Naive thymus-derived CD4-positive, alpha-beta T cell (primary cell): ENCODE measurements at regions of chr5 and their contacts with region 1.

Region 1: DNA sequence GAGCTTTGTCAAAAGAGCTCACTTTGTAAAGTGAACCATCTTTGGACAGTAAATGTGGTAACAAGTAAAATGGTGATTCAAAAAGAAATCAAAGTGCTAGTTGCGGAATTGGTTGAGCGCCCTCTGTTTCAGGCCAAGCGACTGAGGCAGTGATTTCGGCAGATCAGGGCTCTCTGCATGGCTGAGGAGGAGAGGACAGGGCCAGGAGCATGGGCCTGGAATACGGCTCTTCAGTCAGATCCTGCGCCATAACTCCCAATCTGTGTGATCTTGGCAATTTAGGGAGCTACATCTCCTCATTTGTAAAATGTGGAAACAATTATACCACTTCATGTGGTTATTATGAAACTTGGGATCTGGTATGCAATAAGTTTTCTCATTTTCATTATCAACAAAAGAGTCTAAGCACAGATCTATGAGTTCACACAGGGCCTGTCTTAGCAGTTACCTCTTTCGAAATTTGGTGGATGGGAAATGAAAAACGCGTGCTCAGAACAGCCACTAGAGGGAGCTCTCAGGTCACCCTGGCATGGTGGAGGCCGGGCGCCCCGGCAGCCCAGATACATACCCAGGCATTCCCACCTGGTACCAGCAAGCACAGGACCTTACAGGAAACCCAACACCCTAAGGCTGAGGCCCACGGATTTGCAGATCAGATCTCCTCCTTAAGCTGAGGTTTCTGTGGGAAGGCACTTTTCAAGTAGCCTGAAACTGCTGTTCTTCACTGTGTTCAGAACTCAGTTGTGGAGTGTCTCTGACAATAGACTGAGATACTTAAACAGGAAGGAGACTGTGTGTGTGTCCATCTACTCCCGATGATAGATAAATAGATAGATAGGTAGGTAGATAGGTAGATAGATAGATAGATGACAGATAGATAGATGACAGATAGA is 303.7 kb downstream of the RAB3C start:
- DNase-seq: peak; percentile 41 to 77 (median 66)
- ATAC-seq: peak; percentile 91
- H3K4me3 ChIP-seq: no peak overlapping the region
- H3K4me3 Mint-ChIP-seq: peak overlapping the region in 7 of 10 donors; percentile 0 to 67 (median 38)
- H3K27ac ChIP-seq: no peak overlapping the region
- H3K27ac Mint-ChIP-seq: peak overlapping the region in 8 of 9 donors; percentile 13 to 85 (median 49)
- H3K4me1 ChIP-seq: peaks cover 0 to 10% of the 10 kb centered on the region in 2 donors
- H3K4me1 Mint-ChIP-seq: peaks cover 19 to 38% (median 27%) of the 10 kb centered on the region in 7 donors
- H3K27me3 ChIP-seq: no peaks in the 10 kb centered on the region
- H3K27me3 Mint-ChIP-seq: peaks cover 0 to 12% (median 0%) of the 10 kb centered on the region in 5 donors

Region 2: GRCh38 chr5:59007460-59008063 is 121.0 kb after region 1 on chr5:
- CTCF ChIA-PET with region 1: interaction called, 8 read pairs
- POLR2A ChIA-PET with region 1: no interaction called
- intact Hi-C with region 1: loop called (anchors 1 to 5 kb)
- DNase-seq: peak in 4 of 9 donors; percentile 12 to 40 (median 29)
- ATAC-seq: no peak
- H3K4me3 ChIP-seq: no peak overlapping the region
- H3K4me3 Mint-ChIP-seq: no peak overlapping the region
- H3K27ac ChIP-seq: no peak overlapping the region
- H3K27ac Mint-ChIP-seq: peak overlapping the region in 1 of 9 donors; percentile 7
- H3K4me1 ChIP-seq: peaks cover 0 to 6% of the 10 kb centered on the region in 2 donors
- H3K4me1 Mint-ChIP-seq: peaks cover 25 to 79% (median 55%) of the 10 kb centered on the region in 7 donors
- H3K27me3 ChIP-seq: no peaks in the 10 kb centered on the region
- H3K27me3 Mint-ChIP-seq: no peaks in the 10 kb centered on the region

Region 3: DNA sequence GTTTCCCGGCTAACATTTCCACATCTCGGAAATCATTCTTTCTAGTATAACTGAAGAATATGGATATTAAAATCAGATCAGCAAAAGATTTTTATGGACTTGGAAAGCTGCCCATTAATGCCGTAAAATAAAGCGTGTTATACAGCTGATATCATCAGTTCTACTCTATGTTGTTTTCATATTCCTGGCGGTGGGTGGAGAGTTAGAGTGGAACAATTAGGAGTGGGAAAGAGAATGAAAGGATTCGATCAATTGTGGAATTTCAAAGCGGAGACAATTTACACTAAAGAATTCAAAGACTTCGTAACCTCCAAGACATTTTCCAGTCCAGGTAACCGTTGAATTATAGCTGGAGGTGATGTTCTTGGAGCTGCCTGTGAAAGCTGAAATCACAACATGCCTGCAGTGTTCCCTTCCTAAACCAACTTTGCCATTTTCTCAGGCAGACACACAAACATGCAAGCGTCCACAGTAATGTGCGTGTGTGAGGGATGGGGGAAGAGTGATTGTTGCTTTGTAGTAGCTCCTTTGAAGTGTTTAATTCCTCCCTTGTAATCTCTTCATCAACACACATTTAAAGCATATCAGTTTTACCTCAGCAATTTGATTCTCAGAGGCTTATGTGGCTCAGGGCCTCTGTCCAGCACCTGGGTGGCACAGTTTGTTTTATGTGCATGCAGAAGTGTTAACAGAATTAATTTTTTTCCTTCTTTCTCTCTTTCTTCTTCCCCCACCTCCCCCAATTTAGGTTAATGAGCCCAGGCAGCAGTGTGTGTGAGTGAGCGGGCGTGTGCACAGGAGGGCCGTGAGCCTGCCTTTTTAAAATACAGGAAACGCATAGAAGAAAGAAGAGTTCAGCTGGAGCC is 240.4 kb after region 1 on chr5:
- CTCF ChIA-PET with region 1: interaction called, 4 read pairs
- POLR2A ChIA-PET with region 1: no interaction called
- intact Hi-C with region 1: loop called (anchors 1 to 2 kb)
- DNase-seq: peak in 1 of 9 donors; percentile 17
- ATAC-seq: peak; percentile 9
- H3K4me3 ChIP-seq: peak overlapping the region; percentile 46
- H3K4me3 Mint-ChIP-seq: no peak overlapping the region
- H3K27ac ChIP-seq: peak overlapping the region; percentile 84
- H3K27ac Mint-ChIP-seq: no peak overlapping the region
- H3K4me1 ChIP-seq: peaks cover 58 to 59% of the 10 kb centered on the region in 2 donors
- H3K4me1 Mint-ChIP-seq: peaks cover 0 to 20% (median 7%) of the 10 kb centered on the region in 7 donors
- H3K27me3 ChIP-seq: no peaks in the 10 kb centered on the region
- H3K27me3 Mint-ChIP-seq: no peaks in the 10 kb centered on the region

Region 4: DNA sequence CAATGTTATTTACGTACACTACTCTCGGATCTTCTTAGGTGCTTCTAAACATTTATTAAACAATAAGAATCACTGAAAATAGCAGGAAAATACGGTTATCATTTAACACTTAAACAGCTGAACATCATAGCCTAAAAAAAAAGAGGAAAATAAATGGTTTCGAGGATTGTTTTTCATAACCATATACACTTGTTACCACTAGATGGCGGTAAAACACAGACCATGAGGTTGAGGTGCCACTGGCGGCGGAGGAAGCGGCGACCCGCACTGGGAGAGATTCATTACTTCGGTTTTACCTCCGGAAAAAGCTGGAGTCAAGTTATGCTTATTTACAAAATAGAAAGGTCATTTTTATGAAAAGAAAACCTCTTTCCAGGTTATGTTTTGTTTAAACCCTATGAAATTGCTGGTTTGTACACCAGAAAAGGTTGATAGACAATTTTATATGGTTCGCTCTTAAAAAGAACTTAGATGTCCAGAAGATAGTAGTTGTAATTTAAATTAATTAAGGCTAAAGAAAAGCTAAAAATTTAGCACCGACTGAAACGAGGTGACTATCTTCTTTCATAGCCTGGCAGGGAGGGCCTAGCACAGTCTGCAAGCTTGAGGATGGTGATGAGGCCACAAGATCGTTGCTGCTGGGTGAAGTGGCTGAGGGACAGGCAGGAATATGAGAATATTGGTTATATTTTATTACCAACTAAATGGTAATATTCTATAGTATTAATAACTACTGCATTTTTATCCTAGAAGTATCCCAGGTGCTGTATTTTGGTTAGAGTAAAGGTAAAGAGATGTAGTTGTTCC is 302.1 kb after region 1 on chr5:
- CTCF ChIA-PET with region 1: interaction called, 8 read pairs
- POLR2A ChIA-PET with region 1: no interaction called
- intact Hi-C with region 1: loop called in 1 of 2 experiments (anchors 5 kb)
- DNase-seq: peak; percentile 16 to 76 (median 66)
- ATAC-seq: peak; percentile 92
- H3K4me3 ChIP-seq: no peak overlapping the region
- H3K4me3 Mint-ChIP-seq: peak overlapping the region in 6 of 10 donors; percentile 0 to 61 (median 38)
- H3K27ac ChIP-seq: no peak overlapping the region
- H3K27ac Mint-ChIP-seq: no peak overlapping the region
- H3K4me1 ChIP-seq: peaks cover 0 to 4% of the 10 kb centered on the region in 2 donors
- H3K4me1 Mint-ChIP-seq: peaks cover 4 to 7% (median 5%) of the 10 kb centered on the region in 7 donors
- H3K27me3 ChIP-seq: no peaks in the 10 kb centered on the region
- H3K27me3 Mint-ChIP-seq: peaks cover 6 to 49% (median 7%) of the 10 kb centered on the region in 5 donors

Region 5: GRCh38 chr5:59380350-59380951 is 493.9 kb after region 1 on chr5:
- CTCF ChIA-PET with region 1: interaction called, 4 read pairs
- POLR2A ChIA-PET with region 1: no interaction called
- intact Hi-C with region 1: loop called (anchors 1 kb)
- DNase-seq: peak in 6 of 9 donors; percentile 2 to 50 (median 36)
- ATAC-seq: peak; percentile 85
- H3K4me3 ChIP-seq: no peak overlapping the region
- H3K4me3 Mint-ChIP-seq: peak overlapping the region in 1 of 10 donors; percentile 35
- H3K27ac ChIP-seq: no peak overlapping the region
- H3K27ac Mint-ChIP-seq: no peak overlapping the region
- H3K4me1 ChIP-seq: no peaks in the 10 kb centered on the region
- H3K4me1 Mint-ChIP-seq: no peaks in the 10 kb centered on the region
- H3K27me3 ChIP-seq: no peaks in the 10 kb centered on the region
- H3K27me3 Mint-ChIP-seq: peaks cover 0 to 19% (median 0%) of the 10 kb centered on the region in 5 donors

Region 6: DNA sequence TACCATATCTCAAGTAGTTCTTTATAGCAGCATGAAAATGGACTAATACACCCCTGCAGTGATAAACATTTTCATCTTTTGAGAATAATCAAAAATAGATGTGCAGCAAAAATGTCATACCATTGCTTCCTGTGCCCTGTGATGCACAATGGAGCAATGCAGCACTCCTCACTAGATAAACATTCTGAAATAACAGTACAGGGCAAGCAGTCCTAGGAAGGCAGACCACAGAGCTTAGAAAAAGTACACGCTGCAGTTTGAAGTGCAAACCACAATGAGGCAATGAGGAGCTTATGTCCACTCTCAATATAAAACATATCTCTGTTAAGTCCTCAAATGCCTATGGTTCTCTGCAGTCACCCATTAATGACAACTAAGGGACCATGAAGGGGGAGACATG is 639.4 kb after region 1 on chr5:
- CTCF ChIA-PET with region 1: no interaction called
- POLR2A ChIA-PET with region 1: no interaction called
- intact Hi-C with region 1: no loop called
- DNase-seq: no peak
- ATAC-seq: no peak
- H3K4me3 ChIP-seq: no peak overlapping the region
- H3K4me3 Mint-ChIP-seq: no peak overlapping the region
- H3K27ac ChIP-seq: no peak overlapping the region
- H3K27ac Mint-ChIP-seq: no peak overlapping the region
- H3K4me1 ChIP-seq: no peaks in the 10 kb centered on the region
- H3K4me1 Mint-ChIP-seq: peaks cover 0 to 2% (median 0%) of the 10 kb centered on the region in 7 donors
- H3K27me3 ChIP-seq: no peaks in the 10 kb centered on the region
- H3K27me3 Mint-ChIP-seq: no peaks in the 10 kb centered on the region